Cardiac septum (tissue), 1 donor: ENCODE measurements at regions of chr17 and their contacts with region 1.

Region 1: DNA sequence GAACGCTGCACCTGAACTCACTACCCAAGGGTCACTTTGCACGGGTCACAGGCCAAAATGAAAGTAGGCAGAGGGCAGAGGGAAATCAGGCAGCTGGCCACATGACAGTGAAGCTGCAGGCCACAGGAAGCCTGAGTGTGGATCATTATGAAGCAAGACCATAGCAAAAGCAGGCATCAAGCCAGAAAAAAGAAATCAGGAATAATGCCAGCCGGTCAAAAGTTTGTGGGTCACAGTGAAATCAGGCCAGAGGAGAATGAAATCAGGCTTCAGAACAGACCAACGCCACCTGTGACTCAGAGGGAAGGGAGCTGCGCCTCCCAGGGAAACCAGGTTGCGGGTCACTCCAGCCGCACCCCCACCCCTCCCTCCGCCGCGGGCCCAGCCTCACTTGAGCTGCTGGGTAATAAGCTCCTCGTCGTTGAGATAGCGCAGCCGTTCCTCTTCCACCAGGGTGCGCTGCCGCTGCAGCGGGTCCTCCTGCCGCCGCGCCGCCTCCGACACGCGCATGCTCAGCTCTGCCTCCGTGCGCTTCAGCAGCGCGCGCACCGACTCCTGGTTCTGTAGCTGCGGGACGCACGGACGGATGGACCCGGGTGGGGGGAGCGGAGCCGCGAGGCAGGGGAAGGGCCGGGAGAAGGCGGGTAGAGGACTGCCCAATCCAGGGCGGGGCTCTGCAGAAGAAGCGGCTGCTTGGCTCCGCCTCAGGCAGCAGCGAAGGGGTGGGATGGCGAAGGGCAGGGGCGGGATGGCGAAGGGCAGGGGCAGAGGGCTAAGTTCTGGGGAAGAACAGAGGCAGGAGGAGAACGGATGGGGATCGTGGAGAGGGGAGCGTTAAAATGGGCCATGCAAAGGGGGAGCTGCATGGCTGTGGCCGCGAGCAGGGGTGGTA is 47.7 kb downstream of the SRCIN1 start:
- DNase-seq: peak; percentile 95

Region 2: GRCh38 chr17:38584350-38584925 is 26.4 kb after region 1 on chr17:
- intact Hi-C with region 1: loop called (anchors 1 kb)
- DNase-seq: no peak

Region 3: GRCh38 chr17:38628441-38628840 is 70.4 kb after region 1 on chr17:
- intact Hi-C with region 1: no loop called
- DNase-seq: no peak

Region 4: DNA sequence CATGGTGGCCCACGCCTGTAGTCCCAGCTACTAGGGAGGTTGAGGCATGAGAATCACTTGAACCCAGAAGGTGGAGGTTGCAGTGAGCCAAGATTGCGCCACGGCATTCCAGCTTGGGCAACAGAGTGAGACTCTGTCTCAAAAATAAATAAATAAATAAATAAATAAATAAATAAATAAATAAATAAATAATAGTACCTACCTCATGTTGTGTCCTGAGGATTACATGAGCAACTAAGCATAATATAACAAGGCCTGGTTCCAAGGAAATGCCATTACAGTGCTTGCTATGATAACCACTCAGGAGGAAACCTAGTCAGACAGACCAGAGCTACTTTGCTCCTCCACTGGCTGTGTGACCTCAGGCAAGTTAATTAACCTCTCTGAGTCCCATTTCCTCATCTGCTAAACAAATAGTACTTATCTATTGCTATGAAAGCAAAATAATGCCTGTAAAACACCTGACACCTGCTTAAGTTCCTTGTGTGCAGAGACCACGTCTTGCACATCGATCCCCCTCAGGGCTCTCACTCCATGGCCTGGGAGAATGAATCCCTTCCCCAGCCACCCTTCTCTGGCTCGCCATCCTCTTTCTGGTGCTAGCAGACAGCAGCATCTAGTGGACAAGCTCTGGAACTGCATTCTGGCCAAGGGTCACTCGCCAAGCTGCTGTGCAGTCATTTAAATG is 109.2 kb after region 1 on chr17:
- intact Hi-C with region 1: no loop called
- DNase-seq: no peak